ENCODE measurements at regions of chr1 and their contacts with region 1.

Region 1: GRCh38 chr1:50378770-50379169 is 44.5 kb downstream of the DMRTA2 start:
- DNase-seq: no peak
- ATAC-seq: no peak
- H3K4me3 ChIP-seq: no peak overlapping the region
- H3K27ac ChIP-seq: no peak overlapping the region
- H3K4me1 ChIP-seq: no peaks in the 10 kb centered on the region
- H3K27me3 ChIP-seq: peaks cover 0 to 3% of the 10 kb centered on the region in 2 experiments; a peak in 2 of 5 replicates
- CTCF ChIP-seq: no peak
- EP300 ChIP-seq: no peak
- POLR2A ChIP-seq: no peak
- RAD21 ChIP-seq: no peak

Region 2: DNA sequence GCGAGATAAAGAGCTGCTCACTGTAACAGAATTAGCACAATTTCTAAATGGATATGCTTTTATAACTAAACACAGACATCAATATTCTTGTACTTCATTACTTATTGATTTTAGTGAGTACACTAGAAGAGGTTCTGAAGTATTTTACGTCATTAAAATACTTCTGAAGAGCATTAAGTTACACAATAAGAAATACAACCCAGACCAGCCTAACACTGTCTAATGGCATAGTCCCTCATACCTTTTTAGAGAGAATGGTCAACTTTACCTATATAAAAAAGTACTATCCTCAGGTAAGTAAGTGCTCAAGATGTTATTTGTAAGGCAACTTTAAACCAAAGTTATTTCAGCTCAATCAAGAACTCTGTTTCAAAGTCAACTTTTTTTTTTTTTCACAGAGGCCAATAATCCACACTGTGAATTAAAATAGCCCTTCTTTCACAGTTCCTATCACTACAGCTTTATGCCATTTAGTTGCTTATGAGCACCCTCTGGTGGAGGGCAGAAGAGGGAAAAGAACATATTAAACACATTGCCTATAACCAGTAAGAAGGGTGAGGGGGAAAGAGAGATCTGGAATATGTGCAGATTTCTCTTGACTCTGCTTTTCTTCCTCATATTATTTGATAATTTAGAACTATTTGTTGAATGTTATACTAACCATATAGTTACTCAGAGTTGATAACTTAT is 226.6 kb after region 1 on chr1:
- CTCF ChIA-PET with region 1: no interaction called
- POLR2A ChIA-PET with region 1: no interaction called
- in situ Hi-C with region 1: loop called (anchors 5 kb)
- intact Hi-C with region 1: no loop called
- DNase-seq: peak; percentile 31 to 59 (median 40)
- ATAC-seq: peak; percentile 90
- H3K4me3 ChIP-seq: no peak overlapping the region
- H3K27ac ChIP-seq: no peak overlapping the region
- H3K4me1 ChIP-seq: no peaks in the 10 kb centered on the region
- H3K27me3 ChIP-seq: no peaks in the 10 kb centered on the region
- CTCF ChIP-seq: peak; percentile 49 to 74 (median 62); a peak in 5 of 6 replicates
- EP300 ChIP-seq: no peak
- POLR2A ChIP-seq: no peak
- RAD21 ChIP-seq: peak; percentile 47 to 71

Measured in K562 (cell line).